Transverse colon (tissue), 4 donors: ENCODE measurements at regions of chr6 and their contacts with region 1.

Region 1: DNA sequence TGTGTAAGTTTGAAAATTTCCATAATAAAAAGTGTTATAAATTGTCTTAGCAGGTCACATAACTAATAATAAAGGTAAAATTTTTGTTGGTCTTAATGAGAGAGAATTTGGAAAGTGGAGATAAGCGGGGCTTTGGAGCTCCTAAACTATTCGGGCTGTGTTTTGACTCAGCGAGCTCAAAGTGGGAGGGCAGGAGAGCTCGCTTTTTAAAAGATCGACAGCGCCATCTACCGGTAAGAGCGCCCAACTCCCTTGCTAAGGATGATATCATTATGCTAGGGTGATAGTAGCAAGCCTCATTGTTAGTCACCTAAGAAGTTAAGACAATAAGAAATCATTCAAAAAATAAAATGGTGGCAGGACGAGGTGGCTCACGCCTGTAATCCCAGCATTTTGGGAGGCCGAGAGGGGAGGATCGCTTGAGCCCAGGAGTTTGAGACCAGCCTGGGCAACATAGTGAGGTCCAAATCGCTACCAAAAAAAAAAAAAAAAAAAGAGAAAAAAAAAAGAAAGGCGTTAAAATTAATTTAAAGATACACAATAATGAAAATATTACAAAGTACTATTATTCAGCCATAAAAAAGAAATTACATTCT is 24.8 kb downstream of the C6orf15 start:
- DNase-seq: peak; percentile 89
- H3K4me3 ChIP-seq: no peak overlapping the region
- H3K27ac ChIP-seq: peak overlapping the region in 1 of 4 donors; percentile 7
- H3K4me1 ChIP-seq: peaks cover 0 to 24% (median 0%) of the 10 kb centered on the region in 4 donors
- H3K27me3 ChIP-seq: peaks cover 5% of the 10 kb centered on the region
- CTCF ChIP-seq: peak; percentile 72 to 80 (median 79)
- EP300 ChIP-seq: no peak
- POLR2A ChIP-seq: no peak

Region 2: GRCh38 chr6:30453508-30454116 is 634.0 kb before region 1 on chr6:
- in situ Hi-C with region 1: loop called in 1 of 4 experiments (anchors 25 kb)
- intact Hi-C with region 1: no loop called
- DNase-seq: peak; percentile 86
- H3K4me3 ChIP-seq: no peak overlapping the region
- H3K27ac ChIP-seq: no peak overlapping the region
- H3K4me1 ChIP-seq: peaks cover 2 to 19% (median 6%) of the 10 kb centered on the region in 4 donors
- H3K27me3 ChIP-seq: peaks cover 94% of the 10 kb centered on the region
- CTCF ChIP-seq: peak; percentile 68 to 82 (median 76)
- EP300 ChIP-seq: no peak
- POLR2A ChIP-seq: no peak

Region 3: DNA sequence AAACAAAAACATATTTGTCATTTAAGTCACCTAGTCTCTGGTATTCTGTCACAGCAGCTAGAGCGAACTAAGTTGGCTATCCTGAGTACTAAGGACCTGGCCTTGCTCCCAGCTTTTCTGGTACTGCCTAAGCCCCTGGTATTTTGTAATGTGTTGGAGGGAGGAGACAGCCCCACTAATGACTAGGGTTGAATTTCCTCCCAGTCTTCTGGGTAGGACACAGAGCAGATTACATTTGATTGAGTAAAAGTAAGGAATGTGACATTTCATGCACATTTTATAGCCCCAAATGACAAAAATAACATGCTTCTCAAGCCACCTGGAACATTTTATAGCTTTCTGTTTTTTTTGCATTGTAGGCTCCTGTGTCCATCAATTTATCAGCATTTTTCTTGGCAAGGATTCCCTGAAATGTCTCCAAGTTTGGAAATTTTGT is 251.1 kb before region 1 on chr6:
- in situ Hi-C with region 1: no loop called
- intact Hi-C with region 1: loop called (anchors 10 kb)
- DNase-seq: no peak
- H3K4me3 ChIP-seq: no peak overlapping the region
- H3K27ac ChIP-seq: no peak overlapping the region
- H3K4me1 ChIP-seq: peaks cover 0 to 22% (median 6%) of the 10 kb centered on the region in 4 donors
- H3K27me3 ChIP-seq: no peaks in the 10 kb centered on the region
- CTCF ChIP-seq: no peak
- EP300 ChIP-seq: no peak
- POLR2A ChIP-seq: no peak